ENCODE measurements at regions of chr15 and their contacts with region 1.

Region 1: GRCh38 chr15:56245871-56246814 is 2.5 kb upstream of the RFX7 start:
- H3K4me3 Mint-ChIP-seq: peak overlapping the region; percentile 63
- H3K27ac Mint-ChIP-seq: peak overlapping the region; percentile 84
- H3K4me1 Mint-ChIP-seq: peaks cover 31% of the 10 kb centered on the region
- H3K27me3 Mint-ChIP-seq: no peaks in the 10 kb centered on the region

Region 2: GRCh38 chr15:56176996-56177395 is 69.1 kb before region 1 on chr15:
- intact Hi-C with region 1: no loop called
- H3K4me3 Mint-ChIP-seq: no peak overlapping the region
- H3K27ac Mint-ChIP-seq: no peak overlapping the region
- H3K4me1 Mint-ChIP-seq: peaks cover 17% of the 10 kb centered on the region
- H3K27me3 Mint-ChIP-seq: no peaks in the 10 kb centered on the region

Region 3: DNA sequence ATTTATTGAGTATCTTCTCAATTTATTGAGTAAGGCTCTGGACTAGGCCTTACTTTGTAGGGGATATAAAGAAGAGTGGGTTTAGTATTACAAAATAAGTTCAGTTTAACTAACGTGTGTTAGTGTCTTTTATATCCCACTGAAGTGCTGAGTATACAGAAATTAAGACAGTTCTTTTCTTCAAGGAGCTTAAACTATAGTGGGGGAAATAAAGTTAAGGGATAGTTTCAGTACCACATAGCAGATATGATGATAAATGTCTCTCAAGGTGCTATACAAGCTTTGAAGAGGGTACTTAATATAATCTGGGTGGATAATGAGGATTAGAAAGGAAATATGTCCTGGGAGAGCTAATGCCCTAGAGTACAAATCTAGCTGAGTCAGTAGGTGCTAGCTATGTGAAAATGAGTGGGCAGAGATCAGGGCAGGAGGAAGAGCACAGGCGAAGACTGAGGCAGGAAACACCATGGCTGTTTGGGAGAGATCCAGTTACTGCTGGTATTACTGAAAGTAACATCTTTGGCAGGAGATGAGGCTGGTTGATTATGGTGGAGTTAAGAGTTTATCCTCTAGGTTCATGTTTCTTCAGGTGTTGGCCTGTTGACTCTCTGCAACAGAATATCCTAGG is 165.1 kb after region 1 on chr15:
- intact Hi-C with region 1: no loop called
- H3K4me3 Mint-ChIP-seq: no peak overlapping the region
- H3K27ac Mint-ChIP-seq: no peak overlapping the region
- H3K4me1 Mint-ChIP-seq: no peaks in the 10 kb centered on the region
- H3K27me3 Mint-ChIP-seq: no peaks in the 10 kb centered on the region

Region 4: GRCh38 chr15:56428821-56429458 is 182.8 kb after region 1 on chr15:
- intact Hi-C with region 1: loop called (anchors 1 kb)
- H3K4me3 Mint-ChIP-seq: no peak overlapping the region
- H3K27ac Mint-ChIP-seq: no peak overlapping the region
- H3K4me1 Mint-ChIP-seq: no peaks in the 10 kb centered on the region
- H3K27me3 Mint-ChIP-seq: no peaks in the 10 kb centered on the region

Measured in dendritic cell treated with granulocyte-macrophage colony-stimulating factor and Interleukin-4, amounts not matched to agents 40 ng/mL and 50 ng/mL, for 4 days (primary cell).